ENCODE measurements at regions of chr1 and their contacts with region 1.

Region 1: GRCh38 chr1:29230553-29231378 is at the start of gene MECR:
- ATAC-seq: peak; percentile 94 to 99 (median 96)
- H3K4me3 ChIP-seq: peak within 1 kb of the TSS; percentile 60 to 93 (median 82)
- H3K27ac ChIP-seq: peak within 1 kb of the TSS; percentile 49 to 69
- H3K4me1 ChIP-seq: peaks cover 6 to 18% of the 10 kb centered on the region in 2 donors
- total RNA-seq, gene MECR: 24.2 to 42.9 (median 29.2) TPM

Region 2: GRCh38 chr1:29356663-29357062 is 125.9 kb after region 1 on chr1:
- in situ Hi-C with region 1: no loop called
- ATAC-seq: peak in 1 of 8 experiments; percentile 33
- H3K4me3 ChIP-seq: no peak overlapping the region
- H3K27ac ChIP-seq: no peak overlapping the region
- H3K4me1 ChIP-seq: peaks cover 3 to 6% of the 10 kb centered on the region in 2 donors

Region 3: GRCh38 chr1:29453502-29454240 is 222.9 kb after region 1 on chr1:
- in situ Hi-C with region 1: loop called in 1 of 9 experiments (anchors 25 kb)
- ATAC-seq: peak in 3 of 8 experiments; percentile 79 to 93 (median 90)
- H3K4me3 ChIP-seq: no peak overlapping the region
- H3K27ac ChIP-seq: no peak overlapping the region
- H3K4me1 ChIP-seq: peaks cover 8 to 20% of the 10 kb centered on the region in 2 donors

Region 4: DNA sequence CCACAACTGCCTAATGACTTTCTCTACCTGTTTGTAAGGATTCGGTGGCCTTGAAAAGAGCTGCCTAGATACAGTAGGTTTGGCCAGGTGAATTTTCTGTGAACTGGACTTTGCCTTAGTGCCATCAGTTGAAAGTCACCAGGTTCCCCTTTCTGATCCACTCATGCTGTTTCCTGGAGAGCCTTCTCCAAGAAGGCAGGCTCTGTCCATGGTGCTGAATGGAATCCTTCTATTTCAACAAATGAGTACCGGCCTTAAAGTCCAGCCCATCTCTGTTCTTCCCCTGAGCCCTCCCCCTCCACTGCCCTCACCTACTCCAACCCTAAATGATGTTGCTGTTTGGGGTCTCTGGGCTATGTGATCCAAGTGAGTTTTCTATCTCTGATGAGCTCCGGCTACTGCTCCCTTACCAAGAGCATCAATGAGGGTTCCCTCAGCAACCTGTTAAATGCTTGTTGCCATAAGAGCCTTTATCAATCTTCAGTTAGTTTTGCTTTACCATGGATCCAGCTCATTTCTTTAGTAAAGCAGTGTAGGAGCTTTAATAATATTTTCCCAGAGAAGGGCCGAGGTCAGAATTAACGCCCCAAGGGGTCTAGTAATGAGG is 505.9 kb after region 1 on chr1:
- in situ Hi-C with region 1: loop called in 1 of 9 experiments (anchors 25 kb)
- ATAC-seq: peak in 3 of 8 experiments; percentile 25 to 51 (median 49)
- H3K4me3 ChIP-seq: no peak overlapping the region
- H3K27ac ChIP-seq: no peak overlapping the region
- H3K4me1 ChIP-seq: no peaks in the 10 kb centered on the region

Region 5: DNA sequence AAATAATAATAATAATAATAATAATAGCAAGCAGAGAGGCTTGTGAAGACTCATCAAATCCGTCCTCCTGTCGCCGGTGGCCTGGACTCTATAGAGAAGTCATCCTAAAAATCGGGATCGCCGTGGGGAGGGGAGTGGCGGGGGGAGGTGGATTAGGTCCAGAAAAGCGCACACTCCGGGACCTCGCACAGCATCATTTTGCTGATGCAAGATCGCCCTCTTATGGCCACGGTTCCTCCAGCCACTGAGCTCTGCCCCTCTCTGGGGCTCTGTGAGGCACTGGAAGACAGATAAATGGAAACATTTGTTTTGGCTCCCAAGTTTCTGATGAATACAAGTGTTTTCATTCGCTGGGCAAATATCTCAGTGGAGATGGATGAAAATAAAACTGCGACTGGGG is 880.7 kb after region 1 on chr1:
- in situ Hi-C with region 1: loop called in 5 of 9 experiments (anchors 10 to 25 kb)
- ATAC-seq: peak; percentile 90 to 100 (median 98)
- H3K4me3 ChIP-seq: peak overlapping the region in 1 of 5 donors; percentile 9
- H3K27ac ChIP-seq: no peak overlapping the region
- H3K4me1 ChIP-seq: peaks cover 0 to 2% of the 10 kb centered on the region in 2 donors

Region 6: GRCh38 chr1:30684881-30685795 is 1454.4 kb after region 1 on chr1:
- in situ Hi-C with region 1: loop called in 1 of 9 experiments (anchors 25 kb)
- ATAC-seq: peak in 5 of 8 experiments; percentile 90 to 94 (median 93)
- H3K4me3 ChIP-seq: peak overlapping the region in 4 of 5 donors; percentile 6 to 23 (median 18)
- H3K27ac ChIP-seq: peak overlapping the region in 1 of 2 donors; percentile 28
- H3K4me1 ChIP-seq: peaks cover 8 to 26% of the 10 kb centered on the region in 2 donors

Measured in motor neuron (in vitro differentiated cells).